Activated naive CD4-positive, alpha-beta T cell treated with anti-CD3 and anti-CD28 coated beads for 36 hours (primary cell): ENCODE measurements at regions of chr3 and their contacts with region 1.

Region 1: GRCh38 chr3:196537319-196537984 is 22.3 kb upstream of the SMCO1 start:
- DNase-seq: peak; percentile 83
- H3K4me3 Mint-ChIP-seq: no peak overlapping the region
- H3K27ac Mint-ChIP-seq: no peak overlapping the region
- H3K4me1 Mint-ChIP-seq: no peaks in the 10 kb centered on the region
- H3K27me3 Mint-ChIP-seq: peaks cover 2% of the 10 kb centered on the region

Region 2: DNA sequence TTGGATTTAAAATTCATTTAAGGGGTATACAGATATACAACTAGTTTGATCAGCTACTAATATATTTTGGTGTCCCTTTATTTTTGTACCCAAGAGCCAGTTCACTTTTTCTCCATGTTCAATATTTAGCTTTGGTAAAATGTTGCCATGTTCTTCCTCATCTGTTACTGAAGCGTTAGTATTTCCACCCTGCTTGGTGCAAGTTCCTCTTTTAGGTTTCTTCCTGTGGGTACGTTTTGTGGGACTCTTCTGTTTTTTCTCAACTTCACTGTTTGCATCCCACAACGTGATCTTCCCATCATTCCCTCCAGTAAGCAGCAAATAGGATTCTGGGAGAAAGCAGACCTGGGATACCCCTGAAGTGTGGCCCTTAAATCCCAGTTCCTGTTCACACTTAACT is 16.8 kb after region 1 on chr3:
- CTCF ChIA-PET with region 1: interaction called, 12 read pairs
- intact Hi-C with region 1: no loop called
- DNase-seq: no peak
- H3K4me3 Mint-ChIP-seq: no peak overlapping the region
- H3K27ac Mint-ChIP-seq: no peak overlapping the region
- H3K4me1 Mint-ChIP-seq: peaks cover 2% of the 10 kb centered on the region
- H3K27me3 Mint-ChIP-seq: no peaks in the 10 kb centered on the region

Region 3: GRCh38 chr3:196684548-196685407 is 147.3 kb after region 1 on chr3:
- CTCF ChIA-PET with region 1: interaction called, 5 read pairs
- intact Hi-C with region 1: loop called (anchors 1 kb)
- DNase-seq: peak; percentile 74
- H3K4me3 Mint-ChIP-seq: peak overlapping the region; percentile 45
- H3K27ac Mint-ChIP-seq: no peak overlapping the region
- H3K4me1 Mint-ChIP-seq: peaks cover 12% of the 10 kb centered on the region
- H3K27me3 Mint-ChIP-seq: no peaks in the 10 kb centered on the region

Region 4: DNA sequence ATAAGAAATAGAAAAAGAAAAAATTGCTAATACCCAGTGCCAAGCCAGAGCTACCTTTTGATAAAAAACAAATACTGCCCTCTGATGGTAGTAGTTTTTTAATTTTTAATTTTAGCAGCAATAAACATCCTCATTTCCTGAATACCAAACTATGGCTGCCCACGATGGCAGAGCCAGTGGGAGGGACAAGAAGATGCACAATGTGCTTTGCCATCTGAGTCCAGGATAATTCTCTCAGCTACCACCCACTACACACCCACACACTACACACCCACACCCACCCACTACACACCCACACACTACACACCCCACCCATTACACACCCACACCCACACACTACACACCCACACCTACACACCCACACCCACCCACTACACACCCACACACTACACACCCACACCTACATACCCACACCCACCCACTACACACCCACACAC is 156.8 kb after region 1 on chr3:
- CTCF ChIA-PET with region 1: no interaction called
- intact Hi-C with region 1: loop called (anchors 2 kb)
- DNase-seq: no peak
- H3K4me3 Mint-ChIP-seq: no peak overlapping the region
- H3K27ac Mint-ChIP-seq: no peak overlapping the region
- H3K4me1 Mint-ChIP-seq: no peaks in the 10 kb centered on the region
- H3K27me3 Mint-ChIP-seq: no peaks in the 10 kb centered on the region

Region 5: DNA sequence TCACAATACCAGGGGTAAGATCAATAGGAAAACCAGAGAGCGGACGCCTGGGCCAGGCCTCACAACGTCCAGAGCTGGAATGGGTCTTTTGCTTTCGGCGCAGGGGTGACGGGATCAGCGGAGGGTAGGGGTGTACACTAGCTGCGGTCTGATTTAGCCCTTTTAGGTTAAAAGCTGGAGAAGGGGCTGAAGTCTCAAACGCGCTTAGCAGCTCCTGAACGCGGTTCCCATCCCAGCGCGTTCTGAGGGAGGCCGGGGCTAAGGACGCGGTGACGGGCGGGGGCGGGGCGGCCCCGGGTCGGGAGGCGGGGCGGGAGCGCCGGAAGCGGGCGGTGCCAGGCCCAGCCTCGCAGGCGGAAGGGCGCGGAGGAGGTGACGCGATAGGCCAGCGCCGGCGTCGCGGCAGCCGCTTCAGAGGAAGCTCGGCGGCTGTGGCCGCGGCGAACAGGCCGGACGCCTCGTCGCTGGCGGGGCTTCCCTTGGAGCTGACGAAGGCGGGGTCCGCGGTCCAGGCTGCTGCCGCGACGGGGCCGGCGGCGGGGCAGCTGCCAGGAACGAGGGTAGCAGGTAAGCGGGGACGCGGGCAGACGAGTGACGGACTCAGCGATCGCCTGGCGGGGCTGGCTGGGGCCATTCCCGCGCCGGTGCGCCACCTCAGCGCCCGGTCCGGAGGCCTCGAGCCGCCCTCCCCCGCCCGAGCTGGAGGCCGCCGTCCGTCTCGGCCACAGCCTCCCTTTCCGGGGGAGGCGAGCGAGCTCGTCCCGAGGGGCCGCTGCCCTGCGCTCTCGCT is 330.2 kb after region 1 on chr3 and contains the start of gene SENP5:
- CTCF ChIA-PET with region 1: no interaction called
- intact Hi-C with region 1: no loop called
- DNase-seq: peak; percentile 92
- H3K4me3 Mint-ChIP-seq: peak within 1 kb of the TSS; percentile 97
- H3K27ac Mint-ChIP-seq: peak within 1 kb of the TSS; percentile 91
- H3K4me1 Mint-ChIP-seq: peaks cover 31% of the 10 kb centered on the region
- H3K27me3 Mint-ChIP-seq: no peaks in the 10 kb centered on the region
- total RNA-seq, gene SENP5: 24.1 to 24.4 TPM

Region 6: GRCh38 chr3:196969660-196970546 is 432.5 kb after region 1 on chr3:
- CTCF ChIA-PET with region 1: no interaction called
- intact Hi-C with region 1: loop called (anchors 2 kb)
- DNase-seq: peak; percentile 68
- H3K4me3 Mint-ChIP-seq: peak overlapping the region; percentile 70
- H3K27ac Mint-ChIP-seq: no peak overlapping the region
- H3K4me1 Mint-ChIP-seq: peaks cover 7% of the 10 kb centered on the region
- H3K27me3 Mint-ChIP-seq: peaks cover 22% of the 10 kb centered on the region